ENCODE measurements at regions of chr9 and their contacts with region 1.

Region 1: GRCh38 chr9:35829084-35829763 is at the start of gene TMEM8B:
- DNase-seq: peak; percentile 97 to 100 (median 98)
- ATAC-seq: peak; percentile 92
- H3K4me3 ChIP-seq: peak within 1 kb of the TSS; percentile 77
- H3K27ac ChIP-seq: peak within 1 kb of the TSS; percentile 86
- H3K4me1 ChIP-seq: peaks cover 13% of the 10 kb centered on the region
- H3K27me3 ChIP-seq: no peaks in the 10 kb centered on the region
- total RNA-seq, gene TMEM8B: 19.5 to 21.3 (median 21.0) TPM

Region 2: DNA sequence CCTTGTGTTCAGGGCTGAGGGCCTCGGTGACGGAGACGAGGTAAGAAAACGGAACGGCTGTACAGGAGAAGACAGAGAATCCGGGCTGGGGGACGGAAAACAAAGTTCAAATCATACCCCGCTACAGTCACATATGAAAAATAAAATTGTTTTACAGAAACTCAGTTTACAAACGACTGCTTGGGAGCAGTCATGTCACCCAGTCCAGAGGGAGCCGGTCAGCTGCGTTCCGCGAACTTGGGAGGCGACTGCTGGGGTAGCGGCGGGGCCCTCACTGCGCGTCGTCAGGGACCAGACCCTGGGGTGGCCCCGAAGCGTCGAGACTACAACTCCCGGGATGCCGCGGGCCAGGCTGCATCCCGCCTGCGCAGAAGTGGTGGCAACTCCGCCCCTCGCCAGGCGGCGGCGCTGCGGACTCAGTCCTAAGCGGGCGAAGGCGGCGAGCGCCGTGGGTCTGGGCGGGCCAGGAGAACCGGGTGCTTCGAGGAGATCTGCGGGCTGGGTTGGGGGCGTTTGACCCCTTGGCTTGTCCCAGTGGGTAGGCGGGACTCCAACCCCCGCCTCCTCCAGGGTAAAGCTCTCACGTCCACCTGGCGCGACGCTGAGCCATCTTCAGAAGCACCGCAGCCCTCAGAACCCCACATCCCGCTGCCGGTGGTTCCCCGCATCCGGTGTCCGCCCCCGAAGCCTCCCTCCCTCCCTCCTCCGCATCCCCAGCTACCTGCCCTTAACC is 182.5 kb before region 1 on chr9:
- intact Hi-C with region 1: loop called in 1 of 4 experiments (anchors 10 kb)
- DNase-seq: peak; percentile 93 to 98 (median 97)
- ATAC-seq: peak; percentile 96
- H3K4me3 ChIP-seq: peak overlapping the region; percentile 59
- H3K27ac ChIP-seq: peak overlapping the region; percentile 69
- H3K4me1 ChIP-seq: peaks cover 4% of the 10 kb centered on the region
- H3K27me3 ChIP-seq: no peaks in the 10 kb centered on the region

Region 3: GRCh38 chr9:35790385-35791296 is 38.6 kb before region 1 on chr9:
- intact Hi-C with region 1: loop called in 1 of 4 experiments (anchors 5 kb)
- DNase-seq: peak; percentile 73 to 84 (median 79)
- ATAC-seq: peak; percentile 88 to 90
- H3K4me3 ChIP-seq: peak overlapping the region; percentile 58
- H3K27ac ChIP-seq: peak overlapping the region; percentile 41
- H3K4me1 ChIP-seq: no peaks in the 10 kb centered on the region
- H3K27me3 ChIP-seq: no peaks in the 10 kb centered on the region

Region 4: GRCh38 chr9:35844716-35845270 is 15.6 kb after region 1 on chr9:
- intact Hi-C with region 1: loop called in 1 of 4 experiments (anchors 1 kb)
- DNase-seq: peak in 1 of 3 donors; percentile 30
- ATAC-seq: peak; percentile 80 to 84
- H3K4me3 ChIP-seq: no peak overlapping the region
- H3K27ac ChIP-seq: peak overlapping the region; percentile 30
- H3K4me1 ChIP-seq: peaks cover 6% of the 10 kb centered on the region
- H3K27me3 ChIP-seq: no peaks in the 10 kb centered on the region

Region 5: DNA sequence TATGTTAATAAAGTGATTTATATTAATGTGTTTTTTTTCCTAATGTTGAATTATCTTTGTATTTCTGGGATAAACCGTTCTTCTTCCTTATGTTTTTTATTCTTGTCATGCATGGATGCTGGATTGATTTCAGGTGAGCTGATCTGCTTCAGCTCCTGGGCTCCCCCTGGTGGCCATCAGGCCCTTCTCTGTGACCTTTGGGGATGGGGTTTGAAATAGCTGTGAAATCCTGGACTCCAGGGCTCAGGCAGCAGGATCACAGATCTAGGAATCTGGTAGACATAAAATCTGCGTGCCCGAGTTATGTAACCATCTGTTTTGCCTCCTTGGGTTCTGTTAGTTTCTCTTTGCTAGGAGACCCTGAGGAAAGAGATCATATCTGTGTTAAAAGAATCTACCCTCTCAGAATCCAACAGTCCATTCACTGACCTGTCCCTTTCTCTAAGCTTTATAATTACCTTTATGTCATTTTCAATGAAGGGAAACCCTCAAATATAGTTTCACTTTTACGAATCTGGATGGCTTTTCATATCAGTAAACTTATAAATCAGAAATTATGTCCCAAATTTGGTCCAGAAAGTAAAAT is 53.1 kb after region 1 on chr9:
- intact Hi-C with region 1: loop called in 2 of 4 experiments (anchors 2 kb)
- DNase-seq: peak; percentile 87 to 95 (median 91)
- ATAC-seq: peak; percentile 79 to 84
- H3K4me3 ChIP-seq: no peak overlapping the region
- H3K27ac ChIP-seq: no peak overlapping the region
- H3K4me1 ChIP-seq: no peaks in the 10 kb centered on the region
- H3K27me3 ChIP-seq: no peaks in the 10 kb centered on the region

Region 6: GRCh38 chr9:35896570-35896969 is 67.3 kb after region 1 on chr9:
- intact Hi-C with region 1: no loop called
- DNase-seq: no peak
- ATAC-seq: no peak
- H3K4me3 ChIP-seq: no peak overlapping the region
- H3K27ac ChIP-seq: no peak overlapping the region
- H3K4me1 ChIP-seq: no peaks in the 10 kb centered on the region
- H3K27me3 ChIP-seq: no peaks in the 10 kb centered on the region

Measured in right cardiac atrium (tissue), 5 donors.